Posterior vena cava (tissue), 2 donors: ENCODE measurements at regions of chr9 and their contacts with region 1.

Region 1: GRCh38 chr9:78682216-78682615 is 385.3 kb downstream of the PSAT1 start:
- DNase-seq: no peak

Region 2: DNA sequence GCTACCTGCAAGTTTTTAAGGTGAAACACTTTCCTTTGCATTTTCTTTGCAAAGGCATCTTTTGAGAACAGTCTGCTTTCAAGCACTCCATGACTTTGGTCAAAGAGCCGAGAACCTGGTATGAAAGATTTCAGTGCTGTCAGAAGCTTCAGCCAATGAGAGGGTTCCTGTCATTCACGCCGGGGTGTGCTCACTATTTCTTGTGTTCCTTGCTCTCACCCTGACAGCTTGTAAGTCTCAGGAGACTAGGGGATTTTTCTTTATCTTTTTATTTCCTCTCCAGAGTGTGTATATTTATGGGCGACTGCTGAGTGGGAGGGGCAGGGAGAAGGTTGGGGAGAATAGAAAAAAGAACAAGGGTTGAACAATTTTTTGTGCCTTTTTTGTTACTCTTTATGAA is 51.2 kb before region 1 on chr9:
- intact Hi-C with region 1: no loop called
- DNase-seq: no peak

Region 3: DNA sequence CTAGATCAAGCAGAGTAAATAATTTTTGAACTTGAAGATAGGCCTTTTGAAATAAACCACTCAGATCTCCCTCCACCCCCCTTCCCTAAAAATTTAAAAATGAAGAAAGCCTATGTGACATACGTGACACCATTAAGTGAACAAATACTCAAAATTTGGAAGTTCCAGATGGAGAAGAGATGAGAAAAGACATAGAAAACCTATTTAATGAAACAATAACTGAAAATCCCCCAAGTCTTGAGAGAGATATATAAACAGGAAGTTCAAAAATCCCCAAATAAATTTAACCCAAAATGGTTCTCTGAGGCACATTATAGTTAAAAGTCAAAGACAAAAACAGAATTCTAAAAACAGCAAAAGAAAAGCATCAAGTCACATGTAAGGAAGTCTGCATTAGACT is 43.3 kb after region 1 on chr9:
- intact Hi-C with region 1: loop called in 1 of 2 experiments (anchors 1 kb)
- DNase-seq: no peak